ENCODE measurements at regions of chr15 and their contacts with region 1.

Region 1: DNA sequence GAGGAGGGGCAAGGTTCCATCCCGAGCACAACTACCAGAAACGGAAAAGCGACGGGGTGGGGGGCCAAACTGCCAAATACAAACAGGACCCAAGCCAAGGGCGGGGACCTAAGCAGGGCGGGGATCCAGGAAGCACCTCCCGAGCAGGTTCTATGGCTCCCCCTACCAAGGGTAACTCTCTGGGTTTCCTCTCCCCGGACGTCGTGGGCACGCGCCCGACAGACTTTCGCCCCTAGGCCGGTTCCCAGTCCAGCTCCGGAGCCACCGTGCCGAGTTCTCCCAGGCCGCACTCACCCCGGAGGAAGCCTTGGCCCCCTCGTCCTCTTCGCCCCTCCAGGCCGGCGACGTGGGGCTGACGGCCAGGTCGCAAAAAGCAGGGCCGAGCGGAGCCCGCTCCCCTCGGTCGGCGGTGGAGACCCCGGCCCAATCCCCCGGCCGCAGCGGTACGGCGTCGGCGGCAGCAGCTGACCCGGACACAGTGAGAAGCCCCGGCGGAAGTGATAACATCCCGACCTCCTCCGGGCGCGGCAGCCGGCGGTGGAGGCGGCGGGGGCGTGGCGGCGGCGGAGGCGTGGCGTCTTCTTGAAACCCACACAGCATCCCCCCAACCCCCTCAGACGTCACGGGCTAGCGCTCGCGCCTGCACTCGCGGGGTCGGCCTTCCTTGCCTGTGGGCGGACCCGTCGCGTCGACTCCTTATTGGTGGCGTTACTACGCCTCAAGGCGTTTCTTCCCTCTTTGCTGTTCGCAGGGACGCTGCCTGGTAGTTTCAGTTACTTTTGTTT is at the start of gene BNIP2:
- DNase-seq: peak; percentile 99 to 100
- ATAC-seq: peak; percentile 95 to 98 (median 96)
- H3K4me3 ChIP-seq: peak within 1 kb of the TSS; percentile 75
- H3K27ac ChIP-seq: peak within 1 kb of the TSS; percentile 93
- H3K4me1 ChIP-seq: peaks cover 30% of the 10 kb centered on the region
- H3K27me3 ChIP-seq: no peaks in the 10 kb centered on the region
- CTCF ChIP-seq: no peak
- total RNA-seq, gene BNIP2: 46.7 to 79.0 (median 73.8) TPM

Region 2: DNA sequence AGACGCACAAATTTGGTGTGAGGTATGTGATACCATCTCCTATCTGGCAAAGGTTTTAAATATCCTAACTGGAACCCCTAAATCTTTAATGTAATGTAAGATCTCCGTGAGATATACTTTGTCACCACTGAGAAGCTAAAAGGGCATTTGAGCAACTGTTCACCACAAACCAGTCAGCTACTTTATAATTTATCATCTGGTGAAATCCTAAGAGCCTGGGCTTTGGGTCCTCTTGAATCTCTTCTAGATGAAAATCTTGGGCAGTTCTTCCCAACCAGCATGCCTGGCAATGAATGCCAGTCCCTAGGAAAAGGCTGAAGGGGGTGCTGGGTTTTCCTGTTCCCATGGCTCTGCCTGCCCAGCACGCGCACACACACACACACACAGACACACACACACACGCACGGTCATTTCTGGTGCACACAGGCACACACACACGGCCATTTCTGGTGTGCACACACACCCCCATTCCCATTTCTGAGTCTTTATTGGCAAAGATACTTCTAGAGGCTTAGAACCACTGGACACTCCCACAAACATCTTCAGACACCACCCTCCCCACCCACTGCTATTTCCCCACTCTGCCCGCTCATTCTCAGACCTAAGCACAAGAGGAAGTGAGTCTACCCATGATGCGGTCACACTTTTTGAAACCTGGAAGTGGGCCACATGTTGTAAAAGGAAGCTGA is 389.0 kb before region 1 on chr15:
- intact Hi-C with region 1: no loop called
- DNase-seq: peak; percentile 75 to 82
- ATAC-seq: peak; percentile 77 to 86 (median 80)
- H3K4me3 ChIP-seq: peak overlapping the region; percentile 12
- H3K27ac ChIP-seq: peak overlapping the region; percentile 53
- H3K4me1 ChIP-seq: peaks cover 48% of the 10 kb centered on the region
- H3K27me3 ChIP-seq: no peaks in the 10 kb centered on the region
- CTCF ChIP-seq: no peak

Region 3: DNA sequence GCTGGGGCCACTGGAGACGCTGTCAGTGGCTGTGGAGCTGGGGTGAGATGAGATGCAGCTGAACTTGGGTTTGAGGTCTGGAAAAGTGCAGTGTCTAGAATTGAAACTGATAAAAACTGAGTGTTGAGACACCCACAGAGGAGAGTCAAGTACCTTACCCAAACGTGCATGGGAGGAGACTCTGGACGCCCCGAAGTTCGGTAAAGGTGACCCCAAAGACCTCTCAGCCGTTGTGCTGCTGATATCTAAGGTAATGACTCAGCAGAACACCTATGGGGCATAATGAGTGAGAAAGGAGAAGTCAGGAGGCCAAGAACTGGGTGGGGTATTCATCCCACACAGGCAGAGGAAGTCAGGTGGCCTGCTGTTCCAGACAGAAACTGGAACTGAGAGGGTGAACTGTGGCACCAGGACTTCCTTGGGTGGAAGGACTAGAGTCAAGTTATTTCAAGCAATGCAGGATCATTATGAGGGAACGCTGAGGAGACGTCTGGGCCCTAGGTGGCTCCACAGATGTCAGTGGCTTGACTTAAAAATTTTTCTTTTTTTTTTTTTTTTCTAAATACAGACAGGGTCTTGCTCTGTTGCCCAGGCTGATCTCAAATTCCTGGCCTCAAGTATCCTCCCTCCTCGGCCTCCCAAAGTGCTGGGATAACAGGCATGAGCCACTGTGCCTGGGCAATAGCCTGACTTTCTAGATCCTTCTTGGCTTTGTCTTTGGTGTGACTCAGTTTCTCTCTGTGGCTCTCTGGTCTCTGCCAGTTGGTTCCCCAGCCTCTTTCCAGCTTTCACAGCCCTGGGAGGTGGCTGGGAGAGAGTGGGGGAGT is 145.1 kb before region 1 on chr15:
- intact Hi-C with region 1: no loop called
- DNase-seq: no peak
- ATAC-seq: no peak
- H3K4me3 ChIP-seq: no peak overlapping the region
- H3K27ac ChIP-seq: no peak overlapping the region
- H3K4me1 ChIP-seq: no peaks in the 10 kb centered on the region
- H3K27me3 ChIP-seq: peaks cover 0 to 6% (median 0%) of the 10 kb centered on the region in 3 donors
- CTCF ChIP-seq: no peak

Region 4: GRCh38 chr15:59657635-59658148 is 31.3 kb before region 1 on chr15:
- intact Hi-C with region 1: loop called in 1 of 2 experiments (anchors 2 kb)
- DNase-seq: no peak
- ATAC-seq: peak; percentile 17 to 38 (median 26)
- H3K4me3 ChIP-seq: peak overlapping the region; percentile 99
- H3K27ac ChIP-seq: peak overlapping the region; percentile 94
- H3K4me1 ChIP-seq: peaks cover 29% of the 10 kb centered on the region
- H3K27me3 ChIP-seq: no peaks in the 10 kb centered on the region
- CTCF ChIP-seq: no peak

Region 5: DNA sequence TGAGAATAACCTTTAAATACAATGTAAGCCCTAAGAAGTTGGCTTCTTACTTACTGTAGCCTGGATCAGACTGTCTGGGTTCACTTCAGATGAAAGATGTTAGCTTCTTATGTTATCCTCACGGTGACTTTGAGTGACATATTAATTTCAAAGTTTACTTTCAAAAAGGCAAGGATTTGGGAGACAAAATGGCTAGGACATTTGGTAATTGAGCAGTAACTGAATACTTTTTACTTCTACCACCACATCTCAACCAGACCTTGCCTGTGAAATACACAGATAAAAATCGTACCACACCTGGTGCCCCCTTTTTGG is 36.1 kb after region 1 on chr15:
- intact Hi-C with region 1: loop called in 1 of 2 experiments (anchors 5 kb)
- DNase-seq: no peak
- ATAC-seq: no peak
- H3K4me3 ChIP-seq: no peak overlapping the region
- H3K27ac ChIP-seq: peak overlapping the region; percentile 72
- H3K4me1 ChIP-seq: peaks cover 14% of the 10 kb centered on the region
- H3K27me3 ChIP-seq: no peaks in the 10 kb centered on the region
- CTCF ChIP-seq: no peak

Region 6: GRCh38 chr15:60179786-60180391 is 490.9 kb after region 1 on chr15:
- intact Hi-C with region 1: loop called in 1 of 2 experiments (anchors 5 kb)
- DNase-seq: no peak
- ATAC-seq: peak in 1 of 4 donors; percentile 53
- H3K4me3 ChIP-seq: no peak overlapping the region
- H3K27ac ChIP-seq: no peak overlapping the region
- H3K4me1 ChIP-seq: no peaks in the 10 kb centered on the region
- H3K27me3 ChIP-seq: peaks cover 0 to 10% (median 0%) of the 10 kb centered on the region in 3 donors
- CTCF ChIP-seq: peak; percentile 74

Region 7: DNA sequence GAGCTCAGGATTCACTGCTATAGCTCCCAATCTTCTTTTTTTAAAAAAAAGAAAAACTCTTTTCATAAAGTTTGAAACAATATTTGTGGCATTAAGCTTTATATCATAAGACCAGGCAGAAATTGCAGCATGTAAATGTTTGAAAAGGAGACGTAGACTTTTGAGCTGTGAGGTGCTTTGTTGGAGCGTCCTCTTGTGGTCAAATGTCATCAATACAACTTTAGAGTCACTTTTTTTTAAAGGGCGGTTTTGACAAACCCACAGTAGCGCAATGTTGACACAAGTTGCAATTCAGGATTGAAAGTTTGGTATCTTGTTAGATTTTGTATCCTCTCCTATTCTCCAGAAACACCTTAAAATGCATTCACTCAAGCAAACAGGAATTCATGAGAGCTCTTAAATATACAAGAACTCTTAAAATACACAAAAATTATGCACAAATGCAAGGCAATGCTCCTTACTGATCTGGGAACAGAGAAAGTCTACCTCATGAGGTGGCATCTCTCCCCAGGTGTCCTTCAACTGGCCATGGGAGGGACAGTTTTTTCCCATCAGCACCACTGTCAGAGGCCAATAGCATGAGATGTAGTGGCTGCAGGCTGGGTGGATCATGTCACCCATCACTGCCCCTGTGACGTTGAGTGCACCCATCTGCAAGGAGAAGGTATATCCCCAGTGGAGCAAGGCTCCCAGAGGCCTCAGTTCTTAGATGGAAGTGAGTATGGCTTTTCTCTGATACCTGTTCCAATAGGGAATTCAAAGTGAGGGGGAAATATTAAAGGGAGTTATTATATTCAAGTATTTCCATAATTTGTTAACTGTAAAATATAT is 638.0 kb after region 1 on chr15:
- intact Hi-C with region 1: loop called (anchors 2 to 5 kb)
- DNase-seq: no peak
- ATAC-seq: peak in 3 of 4 donors; percentile 46 to 64 (median 47)
- H3K4me3 ChIP-seq: no peak overlapping the region
- H3K27ac ChIP-seq: no peak overlapping the region
- H3K4me1 ChIP-seq: no peaks in the 10 kb centered on the region
- H3K27me3 ChIP-seq: peaks cover 0 to 5% (median 2%) of the 10 kb centered on the region in 3 donors
- CTCF ChIP-seq: peak; percentile 88

Region 8: DNA sequence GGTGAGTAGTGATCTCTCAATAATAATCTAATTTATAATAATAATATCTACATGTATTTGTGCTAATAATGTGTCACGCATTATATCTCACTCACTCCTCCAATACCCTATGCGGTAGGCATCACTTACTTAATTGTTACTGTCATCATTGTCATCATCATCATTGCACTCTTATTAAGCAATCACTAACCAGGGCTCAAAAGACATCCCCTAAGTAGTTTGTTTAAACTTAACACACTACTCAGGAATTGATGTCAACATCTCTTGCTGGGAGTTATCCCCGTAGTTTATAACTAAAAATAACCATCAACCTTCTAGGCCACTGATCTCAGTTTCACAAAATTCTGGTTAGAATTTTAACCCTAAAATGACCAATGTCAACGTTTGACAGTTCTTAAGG is 846.7 kb after region 1 on chr15:
- intact Hi-C with region 1: loop called in 1 of 2 experiments (anchors 10 kb)
- DNase-seq: no peak
- ATAC-seq: peak; percentile 57 to 84 (median 80)
- H3K4me3 ChIP-seq: no peak overlapping the region
- H3K27ac ChIP-seq: no peak overlapping the region
- H3K4me1 ChIP-seq: peaks cover 91% of the 10 kb centered on the region
- H3K27me3 ChIP-seq: no peaks in the 10 kb centered on the region
- CTCF ChIP-seq: no peak

Measured in psoas muscle (tissue), 8 donors.